WTC11 (cell line): ENCODE measurements at regions of chr11 and their contacts with region 1.

Region 1: GRCh38 chr11:9613118-9613829 is 39.8 kb downstream of the WEE1 start:
- DNase-seq: peak; percentile 95
- ATAC-seq: peak; percentile 82
- H3K4me3 Mint-ChIP-seq: peak overlapping the region; percentile 79
- H3K27ac Mint-ChIP-seq: peak overlapping the region; percentile 95
- H3K4me1 Mint-ChIP-seq: peaks cover 32% of the 10 kb centered on the region
- H3K27me3 Mint-ChIP-seq: no peaks in the 10 kb centered on the region
- CTCF ChIP-seq: peak; percentile 82

Region 2: DNA sequence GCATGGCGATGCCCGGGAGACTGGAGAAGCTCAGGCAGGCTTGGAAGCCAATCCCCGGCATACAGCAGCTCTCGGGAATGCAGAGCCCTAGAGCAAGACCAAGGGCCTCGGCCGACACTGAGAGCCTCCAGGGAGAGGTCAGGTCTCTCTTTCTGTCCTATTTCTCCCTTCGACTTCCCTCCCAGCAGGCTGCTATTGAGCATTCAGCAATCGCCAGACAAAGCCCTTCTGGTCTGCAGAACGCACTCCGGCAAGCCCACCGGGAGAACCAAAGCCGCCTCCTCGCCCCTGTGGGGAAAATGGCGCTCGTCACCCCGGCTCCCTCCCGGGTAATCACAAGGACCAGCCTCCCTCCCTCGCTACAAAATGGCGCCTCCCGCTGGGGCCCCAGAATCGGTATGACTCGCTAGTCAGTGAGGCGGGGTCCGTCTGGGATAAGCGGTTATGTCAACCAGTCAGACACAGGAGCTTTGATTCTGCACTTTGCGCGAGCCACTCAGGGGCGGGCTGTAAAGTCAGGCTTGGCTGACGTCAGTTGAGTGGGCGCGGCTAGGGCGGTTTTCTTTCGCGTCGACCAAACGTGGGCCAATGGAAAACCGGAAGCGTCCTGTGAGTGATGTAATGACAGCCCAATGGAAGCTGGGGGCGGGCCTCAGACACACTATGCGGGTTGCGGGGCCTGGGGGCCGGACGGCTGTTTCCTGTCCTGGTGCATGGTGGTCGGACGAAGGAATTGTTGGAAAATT is 152.8 kb before region 1 on chr11 and contains the start of gene ZNF143:
- CTCF ChIA-PET with region 1: interaction called, 10 read pairs
- POLR2A ChIA-PET with region 1: interaction called, 3 read pairs
- DNase-seq: peak; percentile 100
- ATAC-seq: peak; percentile 96
- H3K4me3 Mint-ChIP-seq: peak within 1 kb of the TSS; percentile 98
- H3K27ac Mint-ChIP-seq: peak within 1 kb of the TSS; percentile 99
- H3K4me1 Mint-ChIP-seq: peaks cover 18% of the 10 kb centered on the region
- H3K27me3 Mint-ChIP-seq: no peaks in the 10 kb centered on the region
- CTCF ChIP-seq: no peak
- total RNA-seq, gene ZNF143: 34.0 to 35.8 TPM (median 34.0 TPM) in 3 replicates

Region 3: DNA sequence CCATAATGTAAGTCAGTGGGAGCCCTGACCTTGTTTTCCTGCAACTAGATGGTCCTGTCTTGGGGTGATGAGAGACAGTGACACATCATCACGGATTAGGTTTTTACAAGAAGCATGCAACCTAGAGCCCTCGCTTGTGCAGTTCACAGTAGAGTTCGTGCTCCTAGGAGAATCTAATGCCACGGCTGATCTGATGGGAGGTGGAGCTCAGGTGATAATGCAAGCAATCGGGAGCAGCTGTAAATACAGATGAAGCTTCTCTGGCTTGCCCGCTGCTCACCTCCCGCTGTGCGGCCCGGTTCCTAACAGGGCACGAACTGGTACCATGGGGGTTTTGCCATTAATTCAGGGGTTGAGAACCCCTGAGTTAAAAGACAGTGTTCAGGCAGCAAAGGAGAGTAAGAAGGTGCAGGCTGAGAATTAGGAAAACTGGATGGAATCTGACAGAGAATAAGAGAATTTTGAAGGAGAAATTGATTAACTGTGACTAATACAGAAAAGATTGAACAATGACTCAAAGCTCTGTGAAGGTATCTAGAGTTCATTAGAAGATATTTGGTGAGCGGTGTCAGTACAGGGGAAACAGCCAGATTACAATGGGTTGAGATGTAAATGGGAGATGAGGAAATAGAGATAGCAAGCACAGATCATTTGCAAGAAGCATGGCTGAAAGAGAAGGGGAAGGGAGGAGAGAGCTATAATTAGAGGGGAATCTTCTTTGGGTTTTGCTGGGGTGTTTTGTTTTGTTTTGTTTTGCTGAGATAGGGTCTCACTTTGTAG is 18.8 kb before region 1 on chr11:
- CTCF ChIA-PET with region 1: interaction called, 31 read pairs
- POLR2A ChIA-PET with region 1: no interaction called
- DNase-seq: peak; percentile 26
- ATAC-seq: no peak
- H3K4me3 Mint-ChIP-seq: no peak overlapping the region
- H3K27ac Mint-ChIP-seq: peak overlapping the region; percentile 23
- H3K4me1 Mint-ChIP-seq: peaks cover 19% of the 10 kb centered on the region
- H3K27me3 Mint-ChIP-seq: no peaks in the 10 kb centered on the region
- CTCF ChIP-seq: no peak

Region 4: DNA sequence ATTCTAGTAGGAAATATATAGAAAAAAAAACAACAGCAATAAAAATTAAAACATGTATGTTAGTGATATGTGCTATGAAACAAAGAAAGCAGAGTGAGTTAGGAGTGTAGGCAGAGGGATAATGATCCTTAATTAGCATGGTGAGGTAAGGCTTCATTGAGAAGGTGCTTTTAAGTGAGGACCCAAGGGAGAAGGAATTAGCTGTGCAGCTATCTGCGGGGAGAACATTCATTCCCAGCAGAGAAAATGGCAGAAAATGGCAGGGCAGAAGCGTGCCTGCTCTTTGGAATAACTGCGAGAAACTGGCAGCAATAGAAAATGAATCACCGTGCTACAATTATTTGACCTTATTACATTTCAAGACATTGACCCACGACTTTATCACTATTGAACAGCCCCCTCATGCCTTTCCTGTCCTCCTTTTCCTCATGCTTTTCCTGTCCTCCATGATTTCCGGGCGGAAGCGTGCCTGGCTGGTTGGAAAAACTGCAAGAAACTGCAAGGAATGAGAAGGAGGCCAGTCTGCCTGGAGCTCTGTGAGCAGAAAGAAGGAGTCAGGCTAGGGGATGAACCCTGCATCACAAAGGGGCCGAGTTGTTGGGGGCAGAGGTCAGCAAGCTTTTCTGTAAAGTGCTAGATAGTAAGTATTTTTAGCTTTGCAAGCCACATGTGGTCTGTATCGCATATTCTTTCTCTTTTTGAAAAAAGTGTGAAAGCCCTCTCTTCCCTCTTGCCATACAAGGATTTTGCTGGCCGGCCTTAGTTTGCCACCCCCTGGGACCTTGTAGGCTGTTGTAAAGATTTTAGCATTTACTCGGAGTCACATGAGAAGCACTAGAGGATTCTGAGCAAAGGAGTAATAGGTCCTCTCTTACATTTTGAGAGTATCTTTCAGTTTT is 13.5 kb after region 1 on chr11:
- CTCF ChIA-PET with region 1: interaction called, 20 read pairs
- POLR2A ChIA-PET with region 1: interaction called, 3 read pairs
- DNase-seq: peak; percentile 62
- ATAC-seq: peak; percentile 97
- H3K4me3 Mint-ChIP-seq: peak overlapping the region; percentile 20; the same call in 1 of the 2 replicates
- H3K27ac Mint-ChIP-seq: peak overlapping the region; percentile 99
- H3K4me1 Mint-ChIP-seq: peaks cover 45% of the 10 kb centered on the region
- H3K27me3 Mint-ChIP-seq: no peaks in the 10 kb centered on the region
- CTCF ChIP-seq: no peak

Region 5: GRCh38 chr11:9748361-9748970 is 135.2 kb after region 1 on chr11:
- CTCF ChIA-PET with region 1: interaction called, 45 read pairs
- POLR2A ChIA-PET with region 1: no interaction called
- DNase-seq: peak; percentile 52
- ATAC-seq: peak; percentile 93
- H3K4me3 Mint-ChIP-seq: no peak overlapping the region
- H3K27ac Mint-ChIP-seq: peak overlapping the region; percentile 64; the same call in 1 of the 2 replicates
- H3K4me1 Mint-ChIP-seq: peaks cover 15% of the 10 kb centered on the region
- H3K27me3 Mint-ChIP-seq: no peaks in the 10 kb centered on the region
- CTCF ChIP-seq: peak; percentile 18; the same call in 1 of the 2 replicates

Region 6: DNA sequence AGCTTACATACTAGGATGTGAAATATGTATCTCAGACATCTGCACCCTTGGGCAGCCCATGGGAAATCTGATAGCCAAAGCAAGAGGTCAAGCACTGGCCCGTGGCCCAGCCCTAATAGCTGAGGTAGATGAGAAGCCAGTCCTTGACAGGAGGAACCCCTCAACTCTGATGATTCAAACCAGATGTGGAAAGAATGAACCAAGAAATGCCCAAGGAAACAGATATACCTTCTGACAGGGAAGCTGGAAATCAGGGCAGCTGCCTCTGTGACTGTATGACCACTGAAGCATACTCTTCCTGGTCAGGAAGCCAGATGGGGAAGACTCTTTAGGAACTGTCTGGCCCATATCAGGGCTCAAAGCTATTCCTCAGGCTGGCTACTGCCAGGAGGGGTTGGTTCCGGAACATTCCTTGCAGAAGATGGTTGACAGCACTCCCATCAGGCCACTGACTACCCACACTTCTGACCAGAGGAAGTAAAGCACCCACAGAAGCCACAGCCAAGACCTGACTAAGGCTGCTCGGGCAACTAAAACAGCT is 174.8 kb after region 1 on chr11:
- CTCF ChIA-PET with region 1: no interaction called
- POLR2A ChIA-PET with region 1: no interaction called
- DNase-seq: no peak
- ATAC-seq: no peak
- H3K4me3 Mint-ChIP-seq: no peak overlapping the region
- H3K27ac Mint-ChIP-seq: no peak overlapping the region
- H3K4me1 Mint-ChIP-seq: no peaks in the 10 kb centered on the region
- H3K27me3 Mint-ChIP-seq: no peaks in the 10 kb centered on the region
- CTCF ChIP-seq: no peak